Activated CD8-positive, alpha-beta memory T cell treated with anti-CD3 and anti-CD28 coated beads, Interleukin-2, amount 10 ng/mL, durations not matched to agents 7 days and 5 days (primary cell): ENCODE measurements at regions of chr2 and their contacts with region 1.

Region 1: GRCh38 chr2:112121682-112122254 is 16.4 kb upstream of the FBLN7 start:
- DNase-seq: peak; percentile 56
- ATAC-seq: no peak
- H3K4me3 Mint-ChIP-seq: no peak overlapping the region
- H3K27ac Mint-ChIP-seq: no peak overlapping the region
- H3K4me1 Mint-ChIP-seq: no peaks in the 10 kb centered on the region
- H3K27me3 Mint-ChIP-seq: no peaks in the 10 kb centered on the region

Region 2: GRCh38 chr2:112032689-112033465 is 88.9 kb before region 1 on chr2:
- CTCF ChIA-PET with region 1: no interaction called
- DNase-seq: no peak
- ATAC-seq: no peak
- H3K4me3 Mint-ChIP-seq: no peak overlapping the region
- H3K27ac Mint-ChIP-seq: no peak overlapping the region
- H3K4me1 Mint-ChIP-seq: peaks cover 5% of the 10 kb centered on the region
- H3K27me3 Mint-ChIP-seq: peaks cover 11% of the 10 kb centered on the region

Region 3: DNA sequence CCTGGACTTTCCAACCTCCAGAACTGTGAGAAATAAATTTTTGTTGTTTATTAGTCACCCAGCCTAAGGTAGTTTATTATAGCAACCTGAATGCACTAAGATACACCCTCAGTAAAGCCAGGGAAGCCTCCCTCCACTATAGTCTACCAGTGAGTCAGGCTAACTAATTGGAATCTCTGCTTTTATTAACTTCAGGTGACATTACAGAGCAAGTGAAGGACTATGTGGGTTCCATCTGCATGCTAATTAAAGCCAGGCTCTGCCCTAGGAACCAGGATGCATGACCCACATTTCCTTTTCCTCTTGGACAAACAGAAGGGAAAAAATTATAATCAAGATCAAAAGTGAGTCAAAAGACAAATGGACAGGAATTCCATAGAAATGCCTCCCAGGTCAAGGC is 77.0 kb after region 1 on chr2:
- CTCF ChIA-PET with region 1: no interaction called
- DNase-seq: no peak
- ATAC-seq: no peak
- H3K4me3 Mint-ChIP-seq: no peak overlapping the region
- H3K27ac Mint-ChIP-seq: no peak overlapping the region
- H3K4me1 Mint-ChIP-seq: peaks cover 10% of the 10 kb centered on the region
- H3K27me3 Mint-ChIP-seq: peaks cover 4% of the 10 kb centered on the region

Region 4: GRCh38 chr2:112254466-112255239 is 132.9 kb after region 1 on chr2 and contains the start of gene ZC3H8:
- CTCF ChIA-PET with region 1: interaction called, 13 read pairs
- DNase-seq: peak; percentile 97
- ATAC-seq: peak; percentile 95
- H3K4me3 Mint-ChIP-seq: peak within 1 kb of the TSS; percentile 84
- H3K27ac Mint-ChIP-seq: peak within 1 kb of the TSS; percentile 90
- H3K4me1 Mint-ChIP-seq: peaks cover 29% of the 10 kb centered on the region
- H3K27me3 Mint-ChIP-seq: no peaks in the 10 kb centered on the region
- total RNA-seq, gene ZC3H8: 10.5 to 16.0 TPM